Transverse colon (tissue), 4 donors: ENCODE measurements at regions of chr1 and their contacts with region 1.

Region 1: GRCh38 chr1:72635719-72636118 is 353.4 kb upstream of the NEGR1 start:
- DNase-seq: no peak
- H3K4me3 ChIP-seq: no peak overlapping the region
- H3K27ac ChIP-seq: no peak overlapping the region
- H3K4me1 ChIP-seq: no peaks in the 10 kb centered on the region
- H3K27me3 ChIP-seq: no peaks in the 10 kb centered on the region
- CTCF ChIP-seq: no peak
- EP300 ChIP-seq: no peak
- POLR2A ChIP-seq: no peak

Region 2: DNA sequence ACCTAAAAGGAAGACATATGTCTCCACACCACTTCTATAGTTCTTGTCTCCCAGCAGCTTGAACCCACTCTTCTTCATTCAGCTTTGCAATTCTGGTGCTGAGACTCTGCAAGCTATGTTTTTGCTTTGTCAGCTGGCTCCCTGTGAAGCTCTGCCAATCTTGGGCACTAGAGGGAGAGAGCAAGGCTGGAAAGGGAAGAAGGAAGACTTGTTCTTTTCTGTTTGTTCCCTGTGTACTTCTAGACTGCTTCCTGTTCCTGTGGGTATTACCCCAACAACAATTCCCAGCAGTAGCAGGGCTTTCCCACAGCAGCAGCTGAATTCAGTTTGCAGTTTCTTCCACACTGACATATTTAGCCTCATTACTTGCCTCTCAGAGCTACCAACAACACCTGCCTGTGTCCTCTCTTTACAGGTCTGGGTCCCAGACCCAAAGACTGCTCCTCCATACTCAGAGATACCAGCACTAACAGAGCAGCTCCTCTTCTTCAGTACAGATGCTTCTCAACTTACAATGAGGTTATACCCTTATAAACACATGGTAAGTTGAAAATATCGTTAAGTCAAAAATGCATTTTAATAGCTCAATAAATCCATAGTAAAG is 78.2 kb before region 1 on chr1:
- in situ Hi-C with region 1: no loop called
- intact Hi-C with region 1: loop called (anchors 2 kb)
- DNase-seq: no peak
- H3K4me3 ChIP-seq: no peak overlapping the region
- H3K27ac ChIP-seq: no peak overlapping the region
- H3K4me1 ChIP-seq: no peaks in the 10 kb centered on the region
- H3K27me3 ChIP-seq: no peaks in the 10 kb centered on the region
- CTCF ChIP-seq: no peak
- EP300 ChIP-seq: no peak
- POLR2A ChIP-seq: no peak